B cell (primary cell): ENCODE measurements at regions of chr12 and their contacts with region 1.

Region 1: GRCh38 chr12:64669270-64669842 is 59.1 kb downstream of the RASSF3 start:
- DNase-seq: peak; percentile 67
- ATAC-seq: peak; percentile 73
- H3K4me3 ChIP-seq: peak overlapping the region; percentile 31 to 62 (median 52)
- H3K4me3 Mint-ChIP-seq: peak overlapping the region; percentile 89
- H3K27ac ChIP-seq: peak overlapping the region; percentile 78 to 87
- H3K27ac Mint-ChIP-seq: peak overlapping the region; percentile 83
- H3K4me1 ChIP-seq: peaks cover 93 to 94% of the 10 kb centered on the region in 2 donors
- H3K4me1 Mint-ChIP-seq: peaks cover 91% of the 10 kb centered on the region
- H3K27me3 ChIP-seq: no peaks in the 10 kb centered on the region
- H3K27me3 Mint-ChIP-seq: no peaks in the 10 kb centered on the region
- CTCF ChIP-seq: no peak

Region 2: DNA sequence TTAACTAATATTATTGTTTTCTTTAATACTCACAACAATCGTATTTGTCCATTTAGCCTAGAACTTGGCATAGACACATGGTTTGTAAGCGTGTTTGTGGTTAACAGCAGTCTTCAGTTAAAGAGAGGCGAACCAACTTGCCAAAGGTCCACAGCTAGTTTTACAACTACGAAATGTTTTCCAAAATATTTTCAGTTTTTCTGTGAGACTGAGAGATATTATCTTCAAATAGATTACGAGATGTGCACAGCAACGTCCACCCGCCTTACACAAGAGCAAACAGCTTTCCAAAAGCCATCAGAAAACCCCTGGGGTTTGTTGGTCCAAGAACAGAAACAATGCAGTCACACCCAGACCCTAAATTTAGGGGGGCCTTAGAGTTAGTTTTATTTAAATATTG is 117.7 kb before region 1 on chr12:
- CTCF ChIA-PET with region 1: interaction called, 13 read pairs
- POLR2A ChIA-PET with region 1: no interaction called
- intact Hi-C with region 1: no loop called
- DNase-seq: no peak
- ATAC-seq: no peak
- H3K4me3 ChIP-seq: no peak overlapping the region
- H3K4me3 Mint-ChIP-seq: no peak overlapping the region
- H3K27ac ChIP-seq: no peak overlapping the region
- H3K27ac Mint-ChIP-seq: no peak overlapping the region
- H3K4me1 ChIP-seq: peaks cover 0 to 3% of the 10 kb centered on the region in 2 donors
- H3K4me1 Mint-ChIP-seq: no peaks in the 10 kb centered on the region
- H3K27me3 ChIP-seq: no peaks in the 10 kb centered on the region
- H3K27me3 Mint-ChIP-seq: no peaks in the 10 kb centered on the region
- CTCF ChIP-seq: no peak

Region 3: DNA sequence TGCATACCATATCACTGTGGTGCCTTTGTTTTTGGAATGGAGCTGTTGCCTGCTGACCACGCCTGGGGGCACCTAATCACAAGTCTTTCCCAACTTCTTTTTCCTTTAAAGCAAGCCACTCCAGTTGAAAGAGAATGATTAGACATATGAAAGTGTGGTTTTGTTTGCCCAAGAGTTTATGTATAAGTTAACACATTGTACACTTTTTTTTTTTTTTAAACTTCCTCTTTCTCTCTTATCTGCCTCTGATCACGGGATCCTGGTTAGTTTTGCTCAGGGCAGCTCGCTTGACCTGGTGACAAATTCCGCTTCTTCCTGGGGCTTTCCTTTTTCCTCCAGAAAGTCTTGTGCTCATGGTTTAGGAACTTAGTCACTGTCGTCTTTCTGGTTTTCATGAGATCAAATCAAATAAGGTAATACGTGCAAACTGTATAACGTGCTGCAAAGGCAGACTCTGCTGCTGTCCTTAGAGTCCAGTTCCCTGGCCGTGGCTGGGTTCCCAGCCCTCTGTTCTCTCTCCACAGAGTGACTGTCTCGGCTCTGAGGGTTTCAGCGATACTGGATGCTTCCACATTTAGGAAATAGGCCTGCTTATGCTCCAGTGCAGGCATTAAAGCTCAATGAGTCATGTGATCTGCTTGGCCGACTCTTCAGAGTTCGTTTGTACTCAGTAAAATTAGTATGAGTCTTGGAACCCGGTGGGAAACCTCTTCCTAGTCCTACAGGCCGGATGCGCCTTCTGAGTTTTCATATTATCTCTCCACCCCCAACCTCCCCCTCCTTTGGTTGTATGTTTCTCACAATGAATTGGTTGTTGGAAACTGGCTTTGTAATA is 43.9 kb before region 1 on chr12:
- CTCF ChIA-PET with region 1: interaction called, 6 read pairs
- POLR2A ChIA-PET with region 1: interaction called, 4 read pairs
- intact Hi-C with region 1: loop called (anchors 5 kb)
- DNase-seq: peak; percentile 89
- ATAC-seq: peak; percentile 46
- H3K4me3 ChIP-seq: peak overlapping the region; percentile 46 to 81 (median 56)
- H3K4me3 Mint-ChIP-seq: peak overlapping the region; percentile 90
- H3K27ac ChIP-seq: peak overlapping the region; percentile 89 to 91
- H3K27ac Mint-ChIP-seq: peak overlapping the region; percentile 94
- H3K4me1 ChIP-seq: peaks cover 61 to 80% of the 10 kb centered on the region in 2 donors
- H3K4me1 Mint-ChIP-seq: peaks cover 66% of the 10 kb centered on the region
- H3K27me3 ChIP-seq: no peaks in the 10 kb centered on the region
- H3K27me3 Mint-ChIP-seq: no peaks in the 10 kb centered on the region
- CTCF ChIP-seq: no peak

Region 4: GRCh38 chr12:64679487-64679983 is 10.2 kb after region 1 on chr12:
- CTCF ChIA-PET with region 1: interaction called, 16 read pairs
- POLR2A ChIA-PET with region 1: interaction called, 4 read pairs
- intact Hi-C with region 1: loop called (anchors 1 kb)
- DNase-seq: peak; percentile 63
- ATAC-seq: peak; percentile 65
- H3K4me3 ChIP-seq: peak overlapping the region in 1 of 5 experiments; percentile 26
- H3K4me3 Mint-ChIP-seq: peak overlapping the region; percentile 71
- H3K27ac ChIP-seq: peak overlapping the region; percentile 62 to 66
- H3K27ac Mint-ChIP-seq: peak overlapping the region; percentile 89
- H3K4me1 ChIP-seq: peaks cover 80 to 84% of the 10 kb centered on the region in 2 donors
- H3K4me1 Mint-ChIP-seq: peaks cover 80% of the 10 kb centered on the region
- H3K27me3 ChIP-seq: no peaks in the 10 kb centered on the region
- H3K27me3 Mint-ChIP-seq: no peaks in the 10 kb centered on the region
- CTCF ChIP-seq: no peak